ENCODE measurements at regions of chr17 and their contacts with region 1.

Region 1: DNA sequence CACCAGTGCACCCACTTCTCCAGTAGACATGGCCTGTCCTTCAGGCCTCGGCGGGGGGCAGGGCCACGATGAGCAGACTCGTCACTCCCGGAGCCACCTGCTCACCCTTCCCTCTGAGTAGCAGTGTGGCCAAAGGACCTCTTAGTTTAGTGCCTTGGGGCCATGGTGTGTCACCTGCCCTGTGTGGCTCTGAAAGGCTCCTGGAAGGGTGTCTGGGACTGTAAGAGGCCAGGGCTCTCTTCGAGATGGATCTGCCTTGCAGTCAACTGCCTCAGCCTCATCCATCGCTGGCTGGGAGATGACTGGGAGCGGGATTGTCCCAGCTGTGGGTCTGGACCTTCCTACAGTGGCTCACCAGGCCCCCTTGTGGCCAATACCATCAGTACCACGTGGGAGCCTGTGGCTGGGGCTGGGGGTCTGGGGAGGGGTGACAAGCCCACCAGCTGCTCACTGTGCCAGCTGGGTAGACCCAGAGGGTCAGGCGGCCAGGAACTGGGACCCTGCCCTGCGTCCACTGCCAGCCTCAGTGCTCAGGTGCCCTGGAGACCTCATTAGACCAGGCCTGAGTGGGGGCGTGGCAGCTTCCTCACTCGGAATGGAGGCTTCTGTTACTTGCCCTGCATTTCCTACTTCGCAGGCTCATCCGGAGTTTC is 133.4 kb downstream of the OR1D5 start:
- DNase-seq: peak; percentile 71 to 76
- H3K4me3 ChIP-seq: no peak overlapping the region
- H3K27ac ChIP-seq: peak overlapping the region; percentile 20 to 44 (median 39)
- H3K4me1 ChIP-seq: peaks cover 0 to 20% (median 9%) of the 10 kb centered on the region in 4 donors
- H3K27me3 ChIP-seq: no peaks in the 10 kb centered on the region
- CTCF ChIP-seq: peak in 5 of 7 experiments; percentile 34 to 83 (median 71)
- EP300 ChIP-seq: no peak
- POLR2A ChIP-seq: no peak

Region 2: GRCh38 chr17:2847381-2848333 is 82.3 kb before region 1 on chr17:
- intact Hi-C with region 1: loop called (anchors 5 kb)
- DNase-seq: peak in 1 of 2 donors; percentile 27
- H3K4me3 ChIP-seq: no peak overlapping the region
- H3K27ac ChIP-seq: peak overlapping the region in 1 of 5 donors; percentile 31
- H3K4me1 ChIP-seq: peaks cover 8 to 24% (median 16%) of the 10 kb centered on the region in 4 donors
- H3K27me3 ChIP-seq: peaks cover 0 to 6% (median 0%) of the 10 kb centered on the region in 3 donors
- CTCF ChIP-seq: no peak
- EP300 ChIP-seq: no peak
- POLR2A ChIP-seq: no peak

Measured in stomach (tissue), 19 donors.